ENCODE measurements at regions of chr1 and their contacts with region 1.

Region 1: GRCh38 chr1:157147906-157148717 is 9.9 kb upstream of the ETV3 start:
- DNase-seq: no peak
- H3K4me3 Mint-ChIP-seq: no peak overlapping the region
- H3K27ac Mint-ChIP-seq: peak overlapping the region; percentile 74
- H3K4me1 Mint-ChIP-seq: peaks cover 70% of the 10 kb centered on the region
- H3K27me3 Mint-ChIP-seq: no peaks in the 10 kb centered on the region

Region 2: GRCh38 chr1:157133426-157133825 is 14.7 kb before region 1 on chr1:
- intact Hi-C with region 1: loop called (anchors 1 kb)
- DNase-seq: peak; percentile 33
- H3K4me3 Mint-ChIP-seq: peak overlapping the region; percentile 98
- H3K27ac Mint-ChIP-seq: peak overlapping the region; percentile 67
- H3K4me1 Mint-ChIP-seq: peaks cover 52% of the 10 kb centered on the region
- H3K27me3 Mint-ChIP-seq: no peaks in the 10 kb centered on the region

Region 3: DNA sequence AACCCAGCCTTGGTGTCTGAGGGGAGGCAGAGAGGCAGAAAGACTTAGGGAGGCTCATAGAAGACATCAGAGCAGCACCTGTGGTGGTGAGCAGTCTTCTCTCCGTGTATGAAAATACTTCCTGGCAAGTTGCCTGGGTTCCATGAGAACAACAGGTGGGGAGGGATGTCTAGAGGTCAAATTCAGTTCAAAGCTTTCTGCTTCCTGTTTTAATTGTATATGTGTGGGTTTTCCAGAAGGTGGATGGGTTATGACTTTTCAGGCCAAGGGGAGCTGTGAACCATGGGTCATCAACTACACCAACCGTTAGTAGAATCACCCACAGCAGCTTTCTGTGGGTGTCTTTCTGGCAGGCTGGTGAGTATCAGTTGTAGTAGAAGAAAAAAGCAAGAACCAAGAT is 632.9 kb after region 1 on chr1:
- intact Hi-C with region 1: no loop called
- DNase-seq: no peak
- H3K4me3 Mint-ChIP-seq: no peak overlapping the region
- H3K27ac Mint-ChIP-seq: no peak overlapping the region
- H3K4me1 Mint-ChIP-seq: no peaks in the 10 kb centered on the region
- H3K27me3 Mint-ChIP-seq: no peaks in the 10 kb centered on the region